Ovary (tissue), 10 donors: ENCODE measurements at regions of chr2 and their contacts with region 1.

Region 1: DNA sequence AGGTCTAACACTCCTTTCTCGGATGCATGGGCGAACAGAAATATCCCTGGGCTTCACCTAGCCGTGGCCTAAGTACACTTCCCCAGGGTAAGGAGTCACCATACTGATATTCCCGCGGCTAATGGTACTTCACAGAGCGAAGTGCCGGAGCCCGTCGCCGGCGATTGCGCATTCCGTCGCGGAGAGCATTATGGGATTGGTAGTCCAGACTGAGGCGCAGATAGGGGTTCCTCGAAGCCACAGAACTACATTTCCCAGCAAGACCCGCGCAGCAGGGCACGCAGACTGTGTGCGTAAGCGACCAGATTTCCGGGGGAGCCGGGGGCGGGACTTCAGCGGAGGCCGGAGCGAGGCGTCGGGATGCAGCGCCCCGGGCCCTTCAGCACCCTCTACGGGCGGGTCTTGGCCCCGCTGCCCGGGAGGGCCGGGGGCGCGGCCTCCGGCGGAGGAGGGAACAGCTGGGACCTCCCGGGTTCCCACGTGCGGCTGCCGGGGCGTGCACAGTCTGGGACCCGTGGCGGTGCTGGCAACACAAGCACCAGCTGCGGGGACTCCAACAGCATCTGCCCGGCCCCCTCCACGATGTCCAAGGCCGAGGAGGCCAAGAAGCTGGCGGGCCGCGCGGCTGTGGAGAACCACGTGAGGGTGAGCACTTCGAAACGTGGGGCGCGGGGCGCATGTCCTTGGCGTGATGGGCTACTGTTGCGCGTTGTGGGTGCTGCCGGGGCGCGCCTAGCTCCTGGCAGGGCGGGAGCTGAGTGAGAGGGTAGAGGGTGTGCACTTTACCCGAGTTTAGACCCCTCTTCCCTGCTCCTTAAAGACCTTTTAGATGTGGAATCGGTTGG is at the start of gene RPIA:
- DNase-seq: peak; percentile 98 to 99 (median 98)
- H3K4me3 ChIP-seq: peak within 1 kb of the TSS; percentile 73
- H3K27ac ChIP-seq: peak within 1 kb of the TSS in 1 of 2 donors; percentile 47
- H3K4me1 ChIP-seq: peaks cover 9% of the 10 kb centered on the region
- H3K27me3 ChIP-seq: no peaks in the 10 kb centered on the region
- CTCF ChIP-seq: peak; percentile 45 to 81 (median 74)
- EP300 ChIP-seq: no peak
- POLR2A ChIP-seq: peak; percentile 23
- total RNA-seq, gene RPIA: 10.4 to 19.3 (median 15.4) TPM

Region 2: DNA sequence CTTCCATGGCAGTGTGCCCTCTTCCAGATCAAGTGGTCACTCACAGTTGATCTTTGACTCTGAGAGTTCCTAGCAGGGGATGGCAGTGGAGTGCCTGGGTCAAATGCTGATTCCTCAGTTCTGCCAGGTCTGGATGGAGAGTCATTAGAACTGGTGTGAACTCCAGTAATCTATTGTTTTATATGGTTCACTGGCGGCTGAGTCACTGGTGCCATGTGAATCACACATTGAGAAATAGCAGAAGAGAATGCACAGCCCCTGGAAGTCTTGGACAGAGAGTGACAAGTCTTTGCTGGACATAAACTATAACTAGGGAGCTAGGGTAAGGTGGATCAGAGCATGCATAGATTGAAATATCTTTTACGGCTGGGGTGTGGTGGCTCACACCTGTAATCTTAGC is 151.2 kb before region 1 on chr2:
- intact Hi-C with region 1: no loop called
- DNase-seq: no peak
- H3K4me3 ChIP-seq: no peak overlapping the region
- H3K27ac ChIP-seq: no peak overlapping the region
- H3K4me1 ChIP-seq: no peaks in the 10 kb centered on the region
- H3K27me3 ChIP-seq: no peaks in the 10 kb centered on the region
- CTCF ChIP-seq: no peak
- EP300 ChIP-seq: no peak
- POLR2A ChIP-seq: no peak

Region 3: GRCh38 chr2:88627056-88627855 is 64.3 kb before region 1 on chr2 and contains the start of gene EIF2AK3:
- intact Hi-C with region 1: loop called in 1 of 4 experiments (anchors 5 kb)
- DNase-seq: peak; percentile 97 to 99 (median 98)
- H3K4me3 ChIP-seq: peak within 1 kb of the TSS; percentile 66
- H3K27ac ChIP-seq: peak within 1 kb of the TSS; percentile 88 to 91
- H3K4me1 ChIP-seq: peaks cover 9% of the 10 kb centered on the region
- H3K27me3 ChIP-seq: no peaks in the 10 kb centered on the region
- CTCF ChIP-seq: peak; percentile 20 to 52 (median 51)
- EP300 ChIP-seq: no peak
- POLR2A ChIP-seq: peak; percentile 86
- total RNA-seq, gene EIF2AK3: 13.6 to 19.8 (median 18.8) TPM

Region 4: GRCh38 chr2:88770016-88770415 is 78.5 kb after region 1 on chr2:
- intact Hi-C with region 1: no loop called
- DNase-seq: no peak
- H3K4me3 ChIP-seq: no peak overlapping the region
- H3K27ac ChIP-seq: no peak overlapping the region
- H3K4me1 ChIP-seq: peaks cover 1% of the 10 kb centered on the region
- H3K27me3 ChIP-seq: no peaks in the 10 kb centered on the region
- CTCF ChIP-seq: no peak
- EP300 ChIP-seq: no peak
- POLR2A ChIP-seq: no peak